ENCODE measurements at regions of chr1 and their contacts with region 1.

Region 1: GRCh38 chr1:3727042-3727824 is 25.0 kb upstream of the CCDC27 start:
- DNase-seq: peak; percentile 73
- ATAC-seq: peak; percentile 68
- H3K4me3 Mint-ChIP-seq: no peak overlapping the region
- H3K27ac Mint-ChIP-seq: no peak overlapping the region
- H3K4me1 Mint-ChIP-seq: no peaks in the 10 kb centered on the region
- H3K27me3 Mint-ChIP-seq: peaks cover 4% of the 10 kb centered on the region; the same call in 1 of the 2 replicates
- CTCF ChIP-seq: no peak

Region 2: GRCh38 chr1:3453203-3453761 is 274.0 kb before region 1 on chr1:
- CTCF ChIA-PET with region 1: interaction called, 10 read pairs
- POLR2A ChIA-PET with region 1: no interaction called
- DNase-seq: peak; percentile 92
- ATAC-seq: peak; percentile 63
- H3K4me3 Mint-ChIP-seq: peak overlapping the region; percentile 49
- H3K27ac Mint-ChIP-seq: peak overlapping the region; percentile 70; the same call in 1 of the 2 replicates
- H3K4me1 Mint-ChIP-seq: peaks cover 9% of the 10 kb centered on the region
- H3K27me3 Mint-ChIP-seq: no peaks in the 10 kb centered on the region; the same call in 1 of the 2 replicates
- CTCF ChIP-seq: peak; percentile 78

Region 3: GRCh38 chr1:3618881-3619671 is 108.2 kb before region 1 on chr1:
- CTCF ChIA-PET with region 1: interaction called, 19 read pairs
- POLR2A ChIA-PET with region 1: no interaction called
- DNase-seq: peak; percentile 78
- ATAC-seq: peak; percentile 81
- H3K4me3 Mint-ChIP-seq: no peak overlapping the region
- H3K27ac Mint-ChIP-seq: no peak overlapping the region
- H3K4me1 Mint-ChIP-seq: peaks cover 24% of the 10 kb centered on the region
- H3K27me3 Mint-ChIP-seq: peaks cover 8% of the 10 kb centered on the region
- CTCF ChIP-seq: peak; percentile 77

Region 4: DNA sequence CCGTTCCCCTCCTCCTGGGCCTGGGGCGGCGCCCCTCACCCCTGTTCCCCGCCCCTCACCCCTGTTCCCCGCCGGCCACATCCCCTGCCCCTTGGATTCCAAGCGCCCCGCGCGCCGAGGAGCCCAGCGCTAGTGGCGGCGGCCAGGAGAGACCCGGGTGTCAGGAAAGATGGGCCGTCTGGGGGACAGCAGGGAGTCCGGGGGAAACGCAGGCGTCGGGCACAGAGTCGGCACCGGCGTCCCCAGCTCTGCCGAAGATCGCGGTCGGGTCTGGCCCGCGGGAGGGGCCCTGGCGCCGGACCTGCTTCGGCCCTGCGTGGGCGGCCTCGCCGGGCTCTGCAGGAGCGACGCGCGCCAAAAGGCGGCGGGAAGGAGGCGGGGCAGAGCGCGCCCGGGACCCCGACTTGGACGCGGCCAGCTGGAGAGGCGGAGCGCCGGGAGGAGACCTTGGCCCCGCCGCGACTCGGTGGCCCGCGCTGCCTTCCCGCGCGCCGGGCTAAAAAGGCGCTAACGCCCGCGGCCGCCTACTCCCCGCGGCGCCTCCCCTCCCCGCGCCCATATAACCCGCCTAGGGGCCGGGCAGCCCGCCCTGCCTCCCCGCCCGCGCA is 75.2 kb before region 1 on chr1 and contains the start of gene TP73:
- CTCF ChIA-PET with region 1: interaction called, 27 read pairs
- POLR2A ChIA-PET with region 1: interaction called, 3 read pairs
- DNase-seq: peak; percentile 29
- ATAC-seq: no peak
- H3K4me3 Mint-ChIP-seq: peak within 1 kb of the TSS; percentile 82
- H3K27ac Mint-ChIP-seq: no peak within 1 kb of the TSS
- H3K4me1 Mint-ChIP-seq: peaks cover 10% of the 10 kb centered on the region
- H3K27me3 Mint-ChIP-seq: peaks cover 64% of the 10 kb centered on the region
- CTCF ChIP-seq: no peak
- total RNA-seq, gene TP73: 5.7 to 6.4 TPM (median 5.8 TPM) in 3 replicates

Region 5: GRCh38 chr1:3695326-3696217 is 31.7 kb before region 1 on chr1:
- CTCF ChIA-PET with region 1: interaction called, 68 read pairs
- POLR2A ChIA-PET with region 1: interaction called, 4 read pairs
- DNase-seq: peak; percentile 86
- ATAC-seq: peak; percentile 96
- H3K4me3 Mint-ChIP-seq: no peak overlapping the region
- H3K27ac Mint-ChIP-seq: no peak overlapping the region
- H3K4me1 Mint-ChIP-seq: peaks cover 10% of the 10 kb centered on the region
- H3K27me3 Mint-ChIP-seq: peaks cover 5% of the 10 kb centered on the region
- CTCF ChIP-seq: peak; percentile 53; the same call in 1 of the 2 replicates

Region 6: DNA sequence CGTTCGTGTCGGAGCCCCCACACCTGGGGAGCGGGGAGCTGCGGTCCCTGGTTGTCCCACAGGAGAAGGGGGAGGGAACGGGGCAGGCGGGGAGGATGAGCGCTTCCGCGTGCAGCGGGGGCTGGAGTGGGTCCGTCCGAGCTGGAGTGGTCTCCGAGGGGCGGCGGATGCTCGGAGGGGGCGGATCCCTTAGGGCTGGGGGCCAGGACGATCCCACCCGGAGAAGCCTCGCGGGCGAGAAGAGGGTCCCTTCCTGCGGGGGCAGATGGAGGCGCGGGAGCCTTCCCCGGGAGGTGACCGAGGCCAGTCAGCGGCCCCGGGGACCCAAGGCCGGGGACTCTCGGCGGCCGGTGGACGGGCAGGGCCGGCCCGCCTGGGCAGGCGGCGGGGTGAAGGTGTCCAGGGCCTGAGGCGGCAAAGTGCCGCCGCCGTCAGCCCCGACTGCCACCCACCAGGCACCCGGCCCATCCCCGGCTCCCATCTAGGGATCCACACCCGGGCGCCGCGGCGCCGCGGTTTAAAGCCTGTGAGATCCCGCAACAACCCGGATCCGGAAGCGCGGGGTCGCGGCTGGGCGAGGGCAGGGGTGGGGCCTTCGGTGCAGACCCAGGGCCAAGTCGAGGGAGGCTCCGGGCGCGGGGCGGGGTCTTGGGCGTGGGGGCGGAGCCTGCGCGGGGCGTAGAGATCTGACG is 19.7 kb after region 1 on chr1:
- CTCF ChIA-PET with region 1: interaction called, 22 read pairs
- POLR2A ChIA-PET with region 1: no interaction called
- DNase-seq: peak; percentile 98
- ATAC-seq: peak; percentile 99
- H3K4me3 Mint-ChIP-seq: peak overlapping the region; percentile 96
- H3K27ac Mint-ChIP-seq: no peak overlapping the region
- H3K4me1 Mint-ChIP-seq: peaks cover 30% of the 10 kb centered on the region
- H3K27me3 Mint-ChIP-seq: peaks cover 12% of the 10 kb centered on the region
- CTCF ChIP-seq: no peak